Ovary (tissue), 10 donors: ENCODE measurements at regions of chr3 and their contacts with region 1.

Region 1: GRCh38 chr3:77038468-77038929 is 1.4 kb upstream of the ROBO2 start:
- DNase-seq: peak; percentile 68 to 80 (median 74)
- H3K4me3 ChIP-seq: peak overlapping the region; percentile 40
- H3K27ac ChIP-seq: peak overlapping the region; percentile 85 to 94
- H3K4me1 ChIP-seq: peaks cover 4% of the 10 kb centered on the region
- H3K27me3 ChIP-seq: no peaks in the 10 kb centered on the region
- CTCF ChIP-seq: peak; percentile 64 to 81 (median 67)
- EP300 ChIP-seq: no peak
- POLR2A ChIP-seq: no peak

Region 2: DNA sequence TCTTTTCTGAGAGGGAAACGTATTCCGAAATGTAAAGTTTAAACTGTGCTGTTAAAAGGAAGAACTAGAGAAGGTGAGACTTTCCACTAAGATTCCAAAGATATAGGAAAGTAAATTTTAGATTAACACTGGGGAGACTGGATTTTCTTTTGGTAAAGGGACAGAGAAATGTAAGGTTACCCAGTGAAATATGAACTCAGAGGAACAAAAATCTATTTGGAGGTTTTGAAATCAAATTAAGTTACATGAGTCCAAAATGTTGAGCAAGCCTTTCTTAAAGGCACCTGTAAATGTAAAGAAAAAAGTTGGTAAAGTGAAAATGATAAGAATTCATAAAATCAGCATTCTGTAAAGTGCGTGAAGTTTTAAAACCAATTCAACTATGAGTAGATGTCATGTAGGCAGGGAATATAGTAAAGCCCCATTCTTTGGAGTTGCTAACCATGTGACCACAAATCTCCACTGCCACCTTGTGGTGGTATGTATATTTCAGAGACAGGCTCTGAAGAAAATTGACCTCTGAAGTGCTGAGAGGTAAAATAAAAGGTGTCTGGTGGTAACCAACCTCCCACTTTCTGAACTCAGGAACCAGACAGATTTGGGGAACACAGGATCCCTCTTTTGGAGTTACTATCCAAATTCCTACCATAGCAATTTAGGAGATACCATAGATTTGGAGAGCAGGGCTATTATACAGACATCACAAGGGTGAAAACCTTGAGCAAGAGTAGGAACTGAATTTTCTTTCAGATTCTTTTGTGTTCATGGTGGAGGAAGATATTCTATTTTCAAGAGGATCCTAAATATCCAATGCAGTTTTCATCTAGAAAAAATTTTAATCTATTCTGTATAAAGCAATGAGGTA is 216.7 kb after region 1 on chr3:
- intact Hi-C with region 1: loop called (anchors 2 to 10 kb)
- DNase-seq: peak in 3 of 5 donors; percentile 29 to 61 (median 31)
- H3K4me3 ChIP-seq: no peak overlapping the region
- H3K27ac ChIP-seq: no peak overlapping the region
- H3K4me1 ChIP-seq: no peaks in the 10 kb centered on the region
- H3K27me3 ChIP-seq: no peaks in the 10 kb centered on the region
- CTCF ChIP-seq: peak; percentile 64 to 74 (median 68)
- EP300 ChIP-seq: no peak
- POLR2A ChIP-seq: no peak